PC-3 (cell line): ENCODE measurements at regions of chr4 and their contacts with region 1.

Region 1: GRCh38 chr4:2212831-2213230 is 29.1 kb downstream of the HAUS3 start:
- DNase-seq: no peak
- ATAC-seq: no peak
- H3K4me3 ChIP-seq: no peak overlapping the region
- H3K27ac ChIP-seq: no peak overlapping the region
- H3K4me1 ChIP-seq: peaks cover 9% of the 10 kb centered on the region
- H3K27me3 ChIP-seq: no peaks in the 10 kb centered on the region
- CTCF ChIP-seq: no peak

Region 2: GRCh38 chr4:1939664-1940509 is 272.9 kb before region 1 on chr4:
- CTCF ChIA-PET with region 1: no interaction called
- POLR2A ChIA-PET with region 1: no interaction called
- intact Hi-C with region 1: loop called (anchors 5 kb)
- DNase-seq: peak; percentile 91
- ATAC-seq: peak; percentile 93
- H3K4me3 ChIP-seq: 0 out of 2 replicates have a peak overlapping the region, but pooled peaks have one; percentile 29
- H3K27ac ChIP-seq: peak overlapping the region; percentile 70
- H3K4me1 ChIP-seq: peaks cover 27% of the 10 kb centered on the region
- H3K27me3 ChIP-seq: no peaks in the 10 kb centered on the region
- CTCF ChIP-seq: no peak

Region 3: DNA sequence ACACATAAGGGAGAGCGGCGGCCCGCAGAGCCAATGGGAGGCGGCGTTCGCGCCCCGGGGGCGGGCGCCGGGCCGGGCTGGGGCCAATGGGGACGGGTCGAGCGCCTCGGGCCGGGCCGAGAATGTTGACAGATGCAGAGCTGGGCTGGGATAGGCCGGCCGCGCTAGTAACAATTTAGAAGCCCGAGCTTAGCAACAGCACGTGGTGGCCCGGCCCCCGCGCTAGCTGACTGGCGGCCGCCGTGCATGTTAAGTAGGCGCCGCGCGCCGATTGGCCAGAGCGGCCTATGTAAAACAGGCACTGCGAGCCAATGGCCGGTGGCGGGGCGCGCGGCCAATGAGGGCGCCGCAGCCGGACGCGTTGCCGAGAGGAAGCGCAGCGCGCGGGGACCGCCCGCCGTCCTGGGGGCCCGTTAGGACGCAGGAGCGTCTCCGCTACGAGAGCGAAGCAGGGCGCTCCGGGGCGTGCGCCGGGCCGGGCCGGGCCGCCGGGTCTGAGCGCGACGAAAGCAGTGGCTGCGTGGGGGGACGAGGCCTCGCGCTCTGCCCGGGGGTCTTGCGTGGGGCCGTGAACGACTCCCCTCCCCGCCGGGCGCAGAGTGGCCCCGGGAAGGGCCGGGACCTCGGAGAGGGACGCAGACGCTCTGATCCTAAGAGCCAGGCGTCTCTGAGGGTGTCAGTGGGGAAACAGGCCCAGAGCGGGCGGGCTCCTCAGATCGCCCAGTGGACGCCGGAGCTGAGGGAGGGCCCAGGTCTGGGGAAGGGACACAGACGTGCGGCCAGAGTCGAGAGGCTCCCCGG is 49.5 kb after region 1 on chr4:
- CTCF ChIA-PET with region 1: no interaction called
- POLR2A ChIA-PET with region 1: no interaction called
- intact Hi-C with region 1: no loop called
- DNase-seq: peak; percentile 95
- ATAC-seq: peak; percentile 92
- H3K4me3 ChIP-seq: peak overlapping the region; percentile 72
- H3K27ac ChIP-seq: no peak overlapping the region
- H3K4me1 ChIP-seq: peaks cover 8% of the 10 kb centered on the region; the same call in 1 of the 2 replicates
- H3K27me3 ChIP-seq: no peaks in the 10 kb centered on the region
- CTCF ChIP-seq: no peak

Region 4: GRCh38 chr4:2305766-2306501 is 93.1 kb after region 1 on chr4:
- CTCF ChIA-PET with region 1: no interaction called
- POLR2A ChIA-PET with region 1: no interaction called
- intact Hi-C with region 1: no loop called
- DNase-seq: no peak
- ATAC-seq: peak; percentile 45
- H3K4me3 ChIP-seq: no peak overlapping the region
- H3K27ac ChIP-seq: no peak overlapping the region
- H3K4me1 ChIP-seq: no peaks in the 10 kb centered on the region
- H3K27me3 ChIP-seq: no peaks in the 10 kb centered on the region
- CTCF ChIP-seq: no peak